H1 (cell line): ENCODE measurements at regions of chr14 and their contacts with region 1.

Region 1: GRCh38 chr14:37197421-37198272 is at the start of gene MIPOL1:
- DNase-seq: peak; percentile 25 to 83
- H3K4me3 ChIP-seq: peak within 1 kb of the TSS; percentile 62 to 81 (median 72)
- H3K27ac ChIP-seq: peak within 1 kb of the TSS; percentile 67; the same call in 1 of the 2 replicates
- H3K4me1 ChIP-seq: peaks cover 0 to 3% (median 0%) of the 10 kb centered on the region in 4 experiments; a peak in 2 of 7 replicates
- H3K27me3 ChIP-seq: no peaks in the 10 kb centered on the region
- CTCF ChIP-seq: peak in 2 of 3 experiments; percentile 20 to 33; a peak in 2 of 4 replicates
- EP300 ChIP-seq: no peak
- POLR2A ChIP-seq: peak; percentile 75 to 79
- RAD21 ChIP-seq: peak; percentile 45 to 60
- total RNA-seq, gene MIPOL1: 18.6 and 23.9 TPM in 2 replicates

Region 2: GRCh38 chr14:37172024-37172869 is 25.4 kb before region 1 on chr14 and contains the start of gene SLC25A21:
- CTCF ChIA-PET with region 1: interaction called, 4 read pairs
- POLR2A ChIA-PET with region 1: interaction called, 15 read pairs
- DNase-seq: peak; percentile 61 to 86
- H3K4me3 ChIP-seq: peak within 1 kb of the TSS; percentile 79 to 89 (median 84)
- H3K27ac ChIP-seq: peak within 1 kb of the TSS; percentile 88
- H3K4me1 ChIP-seq: peaks cover 4 to 18% (median 13%) of the 10 kb centered on the region in 4 experiments; a peak in 5 of 7 replicates
- H3K27me3 ChIP-seq: no peaks in the 10 kb centered on the region
- CTCF ChIP-seq: peak in 1 of 3 experiments; percentile 13; a peak in 1 of 4 replicates
- EP300 ChIP-seq: 0 out of 3 replicates have a peak, but pooled peaks of 1 of the 2 experiments have one; percentile 3
- POLR2A ChIP-seq: peak; percentile 82 to 98
- RAD21 ChIP-seq: 0 out of 4 replicates have a peak, but pooled peaks of 1 of the 2 experiments have one; percentile 1
- total RNA-seq, gene SLC25A21: 6.9 and 8.7 TPM in 2 replicates

Region 3: GRCh38 chr14:37179896-37180502 is 17.6 kb before region 1 on chr14:
- CTCF ChIA-PET with region 1: interaction called, 4 read pairs
- POLR2A ChIA-PET with region 1: interaction called, 11 read pairs
- DNase-seq: no peak
- H3K4me3 ChIP-seq: no peak overlapping the region
- H3K27ac ChIP-seq: no peak overlapping the region
- H3K4me1 ChIP-seq: no peaks in the 10 kb centered on the region
- H3K27me3 ChIP-seq: no peaks in the 10 kb centered on the region
- CTCF ChIP-seq: no peak
- EP300 ChIP-seq: no peak
- POLR2A ChIP-seq: no peak
- RAD21 ChIP-seq: no peak

Region 4: DNA sequence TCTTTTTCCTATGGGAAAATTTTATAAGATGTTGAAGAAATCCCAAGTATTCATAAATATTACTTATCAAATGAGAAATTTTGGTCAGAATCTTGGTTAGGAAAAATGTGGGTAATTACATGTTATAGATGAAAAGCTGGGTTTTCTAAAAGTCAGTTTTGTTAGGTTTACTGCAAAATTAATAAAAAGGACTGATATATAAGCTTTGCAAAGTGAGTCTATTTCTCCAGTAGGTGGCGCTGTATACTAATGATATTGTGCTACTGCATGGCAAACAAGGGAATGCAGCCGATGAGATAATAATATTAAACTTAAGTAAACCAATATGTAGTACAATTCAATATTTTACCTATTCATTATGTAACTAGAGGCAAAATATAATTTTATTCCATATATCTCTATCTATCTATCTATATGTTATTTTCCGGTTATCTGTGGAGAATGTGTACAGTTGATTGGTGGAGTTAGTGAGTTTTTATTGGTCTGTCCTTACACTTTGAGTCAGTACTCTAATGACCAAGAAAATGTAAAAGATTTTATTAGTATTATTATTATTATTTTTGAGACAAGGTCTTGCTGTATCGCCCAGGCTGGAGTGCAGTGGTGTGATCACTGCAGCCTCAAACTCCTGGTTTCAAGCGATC is 33.0 kb after region 1 on chr14:
- CTCF ChIA-PET with region 1: interaction called, 11 read pairs
- POLR2A ChIA-PET with region 1: no interaction called
- DNase-seq: no peak
- H3K4me3 ChIP-seq: no peak overlapping the region
- H3K27ac ChIP-seq: no peak overlapping the region
- H3K4me1 ChIP-seq: no peaks in the 10 kb centered on the region
- H3K27me3 ChIP-seq: no peaks in the 10 kb centered on the region
- CTCF ChIP-seq: peak in 2 of 3 experiments; percentile 41 to 61; a peak in 2 of 4 replicates
- EP300 ChIP-seq: no peak
- POLR2A ChIP-seq: no peak
- RAD21 ChIP-seq: peak; percentile 36 to 49; a peak in 3 of 4 replicates